Vagina (tissue), 2 donors: ENCODE measurements at regions of chr19 and their contacts with region 1.

Region 1: GRCh38 chr19:43784981-43785808 is 4.4 kb upstream of the KCNN4 start:
- DNase-seq: no peak
- H3K4me3 ChIP-seq: no peak overlapping the region
- H3K27ac ChIP-seq: peak overlapping the region; percentile 73
- H3K4me1 ChIP-seq: peaks cover 32% of the 10 kb centered on the region
- H3K27me3 ChIP-seq: no peaks in the 10 kb centered on the region
- CTCF ChIP-seq: peak; percentile 86 to 90 (median 87)
- POLR2A ChIP-seq: no peak

Region 2: DNA sequence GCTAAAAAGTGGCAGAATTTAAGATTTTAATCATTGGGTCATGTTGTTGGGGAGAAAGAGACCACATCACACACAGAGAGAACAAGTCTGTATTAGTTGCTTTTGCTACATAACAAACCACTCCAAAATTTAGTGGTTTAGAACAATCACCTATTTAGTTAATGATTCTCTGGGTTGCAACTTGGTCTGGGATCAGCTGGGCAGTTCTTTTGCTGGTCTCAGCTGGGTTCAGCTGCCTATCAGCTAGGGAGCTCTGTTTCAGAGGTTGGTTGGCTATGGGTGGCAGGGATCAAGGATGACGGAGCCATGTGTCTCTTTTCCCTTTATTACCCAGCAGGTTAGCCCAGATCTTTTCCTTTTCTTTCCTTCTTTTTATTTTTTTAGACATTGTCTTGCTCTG is 200.7 kb before region 1 on chr19:
- intact Hi-C with region 1: no loop called
- DNase-seq: no peak
- H3K4me3 ChIP-seq: no peak overlapping the region
- H3K27ac ChIP-seq: no peak overlapping the region
- H3K4me1 ChIP-seq: peaks cover 11% of the 10 kb centered on the region
- H3K27me3 ChIP-seq: no peaks in the 10 kb centered on the region
- CTCF ChIP-seq: no peak
- POLR2A ChIP-seq: no peak

Region 3: GRCh38 chr19:43747557-43748204 is 37.5 kb before region 1 on chr19:
- intact Hi-C with region 1: loop called (anchors 5 kb)
- DNase-seq: no peak
- H3K4me3 ChIP-seq: no peak overlapping the region
- H3K27ac ChIP-seq: no peak overlapping the region
- H3K4me1 ChIP-seq: peaks cover 6% of the 10 kb centered on the region
- H3K27me3 ChIP-seq: no peaks in the 10 kb centered on the region
- CTCF ChIP-seq: no peak
- POLR2A ChIP-seq: no peak